ENCODE measurements at regions of chr4 and their contacts with region 1.

Region 1: GRCh38 chr4:95409127-95409526 is 139.6 kb downstream of the UNC5C start:
- DNase-seq: no peak

Region 2: DNA sequence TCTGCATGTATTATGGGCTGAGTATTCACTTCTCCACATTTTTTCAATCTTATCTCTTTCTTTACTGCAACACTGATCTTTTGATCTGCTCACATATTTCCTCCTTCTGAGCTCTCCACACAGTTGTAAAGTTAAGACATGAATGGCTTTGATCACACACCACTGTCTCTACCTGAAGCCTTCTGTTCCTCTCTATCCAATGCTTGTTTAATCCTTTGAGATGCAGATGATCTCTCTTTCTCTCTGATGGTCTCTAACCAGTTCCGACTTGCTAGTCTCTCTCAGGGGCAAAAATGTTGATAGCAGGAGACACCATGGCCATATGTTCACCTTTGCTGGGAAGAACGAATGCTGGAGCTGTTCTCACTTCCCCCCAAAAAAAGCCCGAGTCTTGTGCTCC is 22.7 kb before region 1 on chr4:
- intact Hi-C with region 1: loop called in 1 of 2 experiments (anchors 2 kb)
- DNase-seq: no peak